SK-N-SH (cell line): ENCODE measurements at regions of chr17 and their contacts with region 1.

Region 1: DNA sequence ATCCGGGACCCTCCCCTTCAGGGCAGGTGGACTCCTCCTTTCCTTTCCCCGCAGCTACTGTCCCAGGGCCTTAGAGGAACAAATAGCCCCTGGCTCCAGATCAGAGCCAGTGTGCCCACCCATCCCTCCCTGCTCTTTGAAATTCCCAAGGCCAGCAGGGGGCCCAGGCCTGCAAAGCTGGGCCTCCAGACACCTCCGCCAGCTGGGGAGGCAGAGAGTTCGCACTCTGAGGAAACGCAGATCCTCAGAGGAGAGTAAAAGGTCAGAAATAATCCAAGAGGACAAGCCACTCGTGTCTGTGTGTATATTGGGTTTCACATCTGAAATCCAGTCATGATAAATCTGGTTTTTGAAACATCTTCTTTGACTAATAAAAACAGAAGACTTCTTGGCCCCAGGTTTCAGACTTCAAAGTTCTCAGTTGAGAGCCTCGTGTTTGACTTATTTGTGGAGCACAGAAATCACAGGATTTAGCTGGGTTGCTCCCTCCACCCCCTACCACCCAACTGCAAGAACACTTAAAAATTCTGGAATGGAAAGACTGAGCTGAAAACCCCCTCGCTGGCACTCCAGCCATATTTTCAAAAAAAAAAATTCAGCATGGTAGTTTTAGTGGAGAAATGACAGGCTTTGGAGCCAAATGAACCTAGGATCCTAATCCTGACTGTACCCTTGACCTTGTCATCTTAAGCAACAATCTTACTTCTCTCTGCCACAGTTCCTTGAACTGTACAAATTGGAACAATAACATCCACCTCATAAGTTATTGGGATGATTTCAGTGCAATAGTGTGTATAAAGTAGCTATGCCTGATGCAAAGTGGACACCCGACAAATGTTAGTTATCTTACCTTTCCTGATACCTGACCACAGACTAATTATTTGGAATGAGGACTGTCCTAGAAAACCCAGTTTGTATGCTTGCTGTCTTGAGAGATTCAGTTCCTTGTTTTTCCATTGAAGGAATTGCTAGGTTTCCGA is 44.5 kb upstream of the TBX2 start:
- DNase-seq: no peak
- H3K4me3 ChIP-seq: no peak overlapping the region
- H3K27ac ChIP-seq: no peak overlapping the region
- H3K4me1 ChIP-seq: peaks cover 9 to 17% of the 10 kb centered on the region in 2 experiments; a peak in 1 of 4 replicates
- H3K27me3 ChIP-seq: no peaks in the 10 kb centered on the region
- CTCF ChIP-seq: 0 out of 2 replicates have a peak, but pooled peaks have one; percentile 23
- EP300 ChIP-seq: no peak
- RAD21 ChIP-seq: peak; percentile 9; the same call in 1 of the 2 replicates

Region 2: GRCh38 chr17:61314368-61315078 is 40.7 kb before region 1 on chr17:
- CTCF ChIA-PET with region 1: no interaction called
- POLR2A ChIA-PET with region 1: no interaction called
- DNase-seq: peak; percentile 69
- H3K4me3 ChIP-seq: no peak overlapping the region
- H3K27ac ChIP-seq: peak overlapping the region; percentile 60 to 74
- H3K4me1 ChIP-seq: peaks cover 27 to 37% of the 10 kb centered on the region in 2 experiments
- H3K27me3 ChIP-seq: no peaks in the 10 kb centered on the region
- CTCF ChIP-seq: peak; percentile 52
- EP300 ChIP-seq: peak in 1 of 2 experiments; percentile 86; a peak in 2 of 4 replicates
- RAD21 ChIP-seq: peak; percentile 53

Region 3: GRCh38 chr17:61366715-61367413 is 11.7 kb after region 1 on chr17:
- CTCF ChIA-PET with region 1: interaction called, 11 read pairs
- POLR2A ChIA-PET with region 1: no interaction called
- DNase-seq: no peak
- H3K4me3 ChIP-seq: no peak overlapping the region
- H3K27ac ChIP-seq: no peak overlapping the region
- H3K4me1 ChIP-seq: peaks cover 0 to 7% of the 10 kb centered on the region in 2 experiments; a peak in 1 of 4 replicates
- H3K27me3 ChIP-seq: no peaks in the 10 kb centered on the region
- CTCF ChIP-seq: no peak
- EP300 ChIP-seq: no peak
- RAD21 ChIP-seq: no peak

Region 4: GRCh38 chr17:61495145-61495857 is 140.1 kb after region 1 on chr17:
- CTCF ChIA-PET with region 1: no interaction called
- POLR2A ChIA-PET with region 1: no interaction called
- DNase-seq: no peak
- H3K4me3 ChIP-seq: no peak overlapping the region
- H3K27ac ChIP-seq: no peak overlapping the region
- H3K4me1 ChIP-seq: peaks cover 4 to 16% of the 10 kb centered on the region in 2 experiments; a peak in 2 of 4 replicates
- H3K27me3 ChIP-seq: no peaks in the 10 kb centered on the region
- CTCF ChIP-seq: no peak
- EP300 ChIP-seq: no peak
- RAD21 ChIP-seq: no peak